ENCODE measurements at regions of chr12 and their contacts with region 1.

Region 1: GRCh38 chr12:101298426-101298825 is 18.5 kb downstream of the UTP20 start:
- DNase-seq: no peak
- ATAC-seq: no peak
- H3K4me3 ChIP-seq: no peak overlapping the region
- H3K27ac ChIP-seq: no peak overlapping the region
- H3K4me1 ChIP-seq: no peaks in the 10 kb centered on the region
- H3K27me3 ChIP-seq: no peaks in the 10 kb centered on the region
- CTCF ChIP-seq: no peak
- POLR2A ChIP-seq: no peak

Region 2: GRCh38 chr12:101229841-101230241 is 68.6 kb before region 1 on chr12:
- intact Hi-C with region 1: no loop called
- DNase-seq: peak in 1 of 5 donors; percentile 28
- ATAC-seq: no peak
- H3K4me3 ChIP-seq: no peak overlapping the region
- H3K27ac ChIP-seq: no peak overlapping the region
- H3K4me1 ChIP-seq: no peaks in the 10 kb centered on the region
- H3K27me3 ChIP-seq: peaks cover 0 to 5% (median 0%) of the 10 kb centered on the region in 9 donors
- CTCF ChIP-seq: no peak
- POLR2A ChIP-seq: no peak

Region 3: DNA sequence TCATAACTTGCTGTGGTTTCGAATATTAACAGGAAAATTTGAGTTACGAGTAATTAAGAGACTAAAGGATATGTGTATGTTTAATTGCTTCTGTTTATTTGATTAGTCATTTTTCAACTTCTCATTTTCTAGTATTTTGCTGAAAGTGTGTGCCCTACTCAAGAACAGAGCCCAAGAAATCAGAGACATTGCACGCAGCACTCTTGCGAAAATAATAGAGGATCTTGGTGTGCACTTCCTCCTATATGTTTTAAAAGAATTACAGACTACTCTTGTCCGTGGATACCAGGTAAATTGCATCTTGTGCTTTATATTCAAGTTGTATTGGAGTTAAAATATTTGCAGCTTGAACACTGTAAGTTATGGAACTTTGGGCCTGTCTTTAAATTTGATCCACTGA is 58.4 kb after region 1 on chr12:
- intact Hi-C with region 1: loop called in 2 of 10 experiments (anchors 10 kb)
- DNase-seq: no peak
- ATAC-seq: no peak
- H3K4me3 ChIP-seq: no peak overlapping the region
- H3K27ac ChIP-seq: no peak overlapping the region
- H3K4me1 ChIP-seq: peaks cover 0 to 3% (median 0%) of the 10 kb centered on the region in 12 donors
- H3K27me3 ChIP-seq: no peaks in the 10 kb centered on the region
- CTCF ChIP-seq: no peak
- POLR2A ChIP-seq: no peak

Region 4: GRCh38 chr12:101368016-101368415 is 69.6 kb after region 1 on chr12:
- intact Hi-C with region 1: loop called in 1 of 10 experiments (anchors 10 kb)
- DNase-seq: no peak
- ATAC-seq: no peak
- H3K4me3 ChIP-seq: no peak overlapping the region
- H3K27ac ChIP-seq: no peak overlapping the region
- H3K4me1 ChIP-seq: no peaks in the 10 kb centered on the region
- H3K27me3 ChIP-seq: no peaks in the 10 kb centered on the region
- CTCF ChIP-seq: no peak
- POLR2A ChIP-seq: no peak